ENCODE measurements at regions of chr15 and their contacts with region 1.

Region 1: GRCh38 chr15:100627789-100628395 is 25.5 kb downstream of the ASB7 start:
- DNase-seq: peak in 1 of 3 donors; percentile 78
- ATAC-seq: peak; percentile 95
- H3K4me3 ChIP-seq: no peak overlapping the region
- H3K4me1 ChIP-seq: no peaks in the 10 kb centered on the region
- CTCF ChIP-seq: peak; percentile 64

Region 2: DNA sequence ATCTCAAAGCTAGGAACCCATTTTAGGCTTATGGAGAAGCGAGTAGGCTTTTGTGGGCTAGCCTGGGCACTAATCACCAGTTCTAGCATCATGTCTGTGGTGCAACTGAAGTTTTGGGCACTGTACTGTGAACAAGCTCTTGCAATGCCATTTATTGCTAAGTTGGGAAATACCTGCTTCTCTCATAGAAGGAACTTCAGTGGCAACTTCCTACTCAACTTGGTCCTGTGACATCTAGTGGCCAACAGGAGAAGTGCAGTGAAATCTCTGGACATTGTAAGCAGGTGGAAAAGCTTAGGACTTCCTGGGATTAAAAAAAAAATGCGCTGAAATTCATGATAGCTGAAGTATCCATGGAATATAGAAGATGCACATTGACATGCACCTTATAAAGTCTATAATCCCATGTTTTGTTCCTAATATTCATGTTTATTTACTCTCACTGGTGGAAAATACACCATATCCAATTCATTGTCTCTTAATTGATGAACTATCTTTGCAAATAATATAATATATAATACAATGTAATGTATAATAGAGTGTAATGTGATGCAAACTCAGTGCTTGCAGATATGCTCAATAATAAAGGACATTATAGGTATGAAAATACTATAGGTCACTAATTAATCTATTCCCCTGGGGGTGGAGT is 245.3 kb after region 1 on chr15:
- intact Hi-C with region 1: loop called (anchors 5 to 10 kb)
- DNase-seq: peak in 1 of 3 donors; percentile 91
- ATAC-seq: peak; percentile 95
- H3K4me3 ChIP-seq: no peak overlapping the region
- H3K4me1 ChIP-seq: no peaks in the 10 kb centered on the region
- CTCF ChIP-seq: peak; percentile 91